ENCODE measurements at regions of chr11 and their contacts with region 1.

Region 1: GRCh38 chr11:125070699-125071254 is 7.7 kb downstream of the SLC37A2 start:
- DNase-seq: peak in 5 of 6 donors; percentile 9 to 70 (median 22)
- ATAC-seq: peak in 3 of 4 donors; percentile 70 to 86 (median 83)
- H3K4me3 ChIP-seq: no peak overlapping the region
- H3K27ac ChIP-seq: peak overlapping the region in 2 of 4 donors; percentile 22 to 48
- H3K4me1 ChIP-seq: peaks cover 0 to 7% (median 5%) of the 10 kb centered on the region in 3 donors
- H3K27me3 ChIP-seq: peaks cover 0 to 5% (median 0%) of the 10 kb centered on the region in 4 donors
- CTCF ChIP-seq: no peak

Region 2: DNA sequence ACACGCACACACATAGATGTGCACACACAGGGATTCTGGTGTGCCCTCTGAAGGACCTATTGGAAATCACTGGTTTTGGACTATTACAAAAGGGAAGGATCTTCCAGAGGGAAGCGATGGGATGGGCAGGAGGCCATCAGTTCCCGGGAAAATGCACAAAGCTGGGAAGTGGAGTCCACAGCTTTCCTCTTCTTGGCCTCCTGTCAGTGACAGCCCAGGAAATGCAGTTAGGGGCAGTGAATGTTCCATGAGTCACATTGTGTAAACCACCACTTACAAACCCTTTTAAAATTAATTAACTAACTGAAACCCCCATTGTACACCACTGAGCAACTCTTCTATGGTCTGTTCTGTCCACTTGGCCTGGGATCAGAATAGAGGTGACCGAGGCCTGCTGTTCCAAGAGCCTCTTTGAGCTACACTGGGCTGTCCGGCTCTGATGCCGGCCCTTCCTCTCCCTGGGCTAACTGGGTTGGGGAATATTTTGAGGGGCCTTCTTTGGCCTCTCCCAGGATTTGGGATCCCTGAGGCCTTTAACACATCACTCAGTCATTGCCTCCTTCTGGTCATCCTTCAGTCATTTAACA is 287.6 kb after region 1 on chr11:
- intact Hi-C with region 1: loop called in 1 of 3 experiments (anchors 10 kb)
- DNase-seq: no peak
- ATAC-seq: no peak
- H3K4me3 ChIP-seq: no peak overlapping the region
- H3K27ac ChIP-seq: no peak overlapping the region
- H3K4me1 ChIP-seq: no peaks in the 10 kb centered on the region
- H3K27me3 ChIP-seq: no peaks in the 10 kb centered on the region
- CTCF ChIP-seq: no peak

Measured in pancreas (tissue), 10 donors.